Mammary epithelial cell (primary cell): ENCODE measurements at regions of chr3 and their contacts with region 1.

Region 1: DNA sequence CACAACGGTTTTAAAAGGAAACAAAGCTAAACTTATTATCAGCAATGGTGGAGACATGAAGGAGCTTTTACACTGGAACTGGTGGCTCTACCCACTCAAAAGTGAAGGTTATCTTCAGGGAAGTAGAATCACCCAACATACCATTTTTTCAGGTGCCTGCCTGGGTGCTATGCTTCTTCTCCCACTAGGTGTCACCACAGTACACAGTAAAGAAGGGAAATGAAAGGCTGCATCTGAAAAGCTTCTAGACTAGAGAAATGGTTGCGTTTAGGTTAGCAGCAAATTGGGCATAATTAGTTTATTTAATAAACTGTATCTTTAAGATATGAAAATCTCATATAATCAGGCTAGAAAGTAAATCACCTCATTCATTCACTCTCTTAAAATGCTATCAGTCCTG is 47.0 kb upstream of the SELENOK start:
- DNase-seq: peak; percentile 35
- H3K4me3 ChIP-seq: no peak overlapping the region
- H3K27ac ChIP-seq: no peak overlapping the region
- H3K4me1 ChIP-seq: peaks cover 10% of the 10 kb centered on the region
- H3K27me3 ChIP-seq: no peaks in the 10 kb centered on the region
- CTCF ChIP-seq: peak; percentile 80 to 82

Region 2: GRCh38 chr3:53544357-53544756 is 394.3 kb before region 1 on chr3:
- CTCF ChIA-PET with region 1: no interaction called
- dilution Hi-C with region 1: no loop called
- in situ Hi-C with region 1: no loop called
- intact Hi-C with region 1: no loop called
- DNase-seq: peak; percentile 51
- H3K4me3 ChIP-seq: no peak overlapping the region
- H3K27ac ChIP-seq: no peak overlapping the region
- H3K4me1 ChIP-seq: no peaks in the 10 kb centered on the region
- H3K27me3 ChIP-seq: no peaks in the 10 kb centered on the region
- CTCF ChIP-seq: no peak

Region 3: GRCh38 chr3:54138937-54139569 is 200.4 kb after region 1 on chr3:
- CTCF ChIA-PET with region 1: no interaction called
- dilution Hi-C with region 1: no loop called
- in situ Hi-C with region 1: no loop called
- intact Hi-C with region 1: loop called (anchors 5 kb)
- DNase-seq: peak; percentile 4
- H3K4me3 ChIP-seq: no peak overlapping the region
- H3K27ac ChIP-seq: no peak overlapping the region
- H3K4me1 ChIP-seq: no peaks in the 10 kb centered on the region
- H3K27me3 ChIP-seq: peaks cover 2% of the 10 kb centered on the region
- CTCF ChIP-seq: no peak

Region 4: GRCh38 chr3:54146506-54147239 is 208.0 kb after region 1 on chr3:
- CTCF ChIA-PET with region 1: no interaction called
- dilution Hi-C with region 1: no loop called
- in situ Hi-C with region 1: no loop called
- intact Hi-C with region 1: loop called (anchors 1 kb)
- DNase-seq: peak; percentile 23
- H3K4me3 ChIP-seq: no peak overlapping the region
- H3K27ac ChIP-seq: no peak overlapping the region
- H3K4me1 ChIP-seq: no peaks in the 10 kb centered on the region
- H3K27me3 ChIP-seq: no peaks in the 10 kb centered on the region
- CTCF ChIP-seq: peak; percentile 32 to 72

Region 5: GRCh38 chr3:54339608-54340007 is 401.0 kb after region 1 on chr3:
- CTCF ChIA-PET with region 1: no interaction called
- dilution Hi-C with region 1: no loop called
- in situ Hi-C with region 1: no loop called
- intact Hi-C with region 1: loop called (anchors 1 kb)
- DNase-seq: no peak
- H3K4me3 ChIP-seq: no peak overlapping the region
- H3K27ac ChIP-seq: no peak overlapping the region
- H3K4me1 ChIP-seq: no peaks in the 10 kb centered on the region
- H3K27me3 ChIP-seq: no peaks in the 10 kb centered on the region
- CTCF ChIP-seq: peak in 1 of 2 donors; percentile 7

Region 6: DNA sequence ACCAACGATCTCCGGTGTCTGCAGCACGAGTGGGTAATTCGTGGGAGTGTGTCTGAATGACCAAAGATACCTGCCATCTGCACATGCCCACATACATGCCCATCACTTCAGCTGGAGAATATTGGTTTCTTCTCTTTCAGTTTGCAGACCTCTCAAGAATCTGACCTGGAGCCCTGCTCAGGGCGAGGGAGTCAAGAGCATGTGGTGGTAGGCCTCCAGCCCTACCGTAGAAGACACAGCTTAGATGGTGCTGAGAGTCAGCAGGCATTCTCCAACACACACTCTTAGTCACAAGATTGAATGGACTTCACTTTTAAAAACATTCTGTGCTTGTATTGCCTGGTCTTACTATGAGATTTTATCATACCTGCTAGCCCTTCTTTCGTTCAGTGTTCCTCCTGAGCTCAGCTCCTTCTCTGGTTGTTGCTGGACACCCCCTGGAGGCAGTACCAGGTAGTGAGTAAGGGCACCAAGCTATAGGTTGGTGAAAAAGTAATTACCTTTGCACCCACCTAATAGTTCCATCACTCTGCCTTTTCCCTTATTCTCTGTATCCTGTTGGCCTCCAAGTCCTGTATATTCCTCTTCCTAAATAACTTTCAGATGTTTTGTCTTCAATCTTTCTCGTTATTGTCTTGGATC is 435.7 kb after region 1 on chr3:
- CTCF ChIA-PET with region 1: interaction called, 13 read pairs
- dilution Hi-C with region 1: no loop called
- in situ Hi-C with region 1: loop called in 1 of 2 experiments (anchors 25 kb)
- intact Hi-C with region 1: loop called (anchors 1 kb)
- DNase-seq: peak; percentile 10
- H3K4me3 ChIP-seq: no peak overlapping the region
- H3K27ac ChIP-seq: no peak overlapping the region
- H3K4me1 ChIP-seq: no peaks in the 10 kb centered on the region
- H3K27me3 ChIP-seq: no peaks in the 10 kb centered on the region
- CTCF ChIP-seq: peak; percentile 44 to 73

Region 7: GRCh38 chr3:55180936-55181535 is 1242.4 kb after region 1 on chr3:
- CTCF ChIA-PET with region 1: no interaction called
- dilution Hi-C with region 1: no loop called
- in situ Hi-C with region 1: no loop called
- intact Hi-C with region 1: loop called (anchors 5 kb)
- DNase-seq: no peak
- H3K4me3 ChIP-seq: no peak overlapping the region
- H3K27ac ChIP-seq: no peak overlapping the region
- H3K4me1 ChIP-seq: no peaks in the 10 kb centered on the region
- H3K27me3 ChIP-seq: no peaks in the 10 kb centered on the region
- CTCF ChIP-seq: peak; percentile 69 to 75

Region 8: DNA sequence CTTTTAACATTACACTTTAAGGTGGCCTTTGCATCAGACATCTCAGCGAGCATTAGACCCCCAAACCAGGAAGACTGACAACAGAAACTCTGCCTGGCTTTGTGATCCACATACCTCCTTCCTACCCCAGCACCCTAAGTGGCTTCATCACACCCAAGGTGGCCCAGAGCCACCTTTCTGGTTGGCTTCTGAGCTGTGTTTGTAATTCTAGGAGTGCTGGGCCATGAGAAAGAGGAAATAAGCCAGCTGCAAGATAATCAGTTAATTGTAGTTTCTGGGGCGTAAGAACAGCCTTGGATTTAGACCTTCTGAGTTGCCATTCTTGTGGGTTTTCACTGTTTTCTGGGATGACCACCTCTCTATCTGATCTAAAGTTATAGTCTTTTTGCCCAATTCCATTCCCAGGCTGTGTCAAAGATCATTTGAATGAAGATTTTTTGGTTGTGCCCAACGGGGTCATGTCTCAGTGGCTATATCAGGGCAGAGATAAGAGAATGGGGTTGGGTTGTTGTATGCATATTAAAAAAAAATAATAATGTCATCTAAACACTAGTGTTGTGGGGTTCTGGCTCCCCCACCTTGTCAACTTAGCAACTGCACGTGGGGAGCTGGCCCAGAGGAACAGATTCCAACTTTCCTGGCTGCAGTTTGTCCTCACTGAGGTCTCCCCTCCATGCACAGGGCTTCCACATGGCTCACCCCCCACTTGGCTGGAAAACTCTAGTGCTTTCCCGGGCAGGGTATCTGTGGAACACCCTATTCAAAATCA is 1783.3 kb after region 1 on chr3:
- CTCF ChIA-PET with region 1: no interaction called
- dilution Hi-C with region 1: no loop called
- in situ Hi-C with region 1: no loop called
- intact Hi-C with region 1: loop called (anchors 5 kb)
- DNase-seq: peak; percentile 27
- H3K4me3 ChIP-seq: no peak overlapping the region
- H3K27ac ChIP-seq: no peak overlapping the region
- H3K4me1 ChIP-seq: no peaks in the 10 kb centered on the region
- H3K27me3 ChIP-seq: peaks cover 4% of the 10 kb centered on the region
- CTCF ChIP-seq: peak; percentile 73 to 76